ENCODE measurements at regions of chr2 and their contacts with region 1.

Region 1: DNA sequence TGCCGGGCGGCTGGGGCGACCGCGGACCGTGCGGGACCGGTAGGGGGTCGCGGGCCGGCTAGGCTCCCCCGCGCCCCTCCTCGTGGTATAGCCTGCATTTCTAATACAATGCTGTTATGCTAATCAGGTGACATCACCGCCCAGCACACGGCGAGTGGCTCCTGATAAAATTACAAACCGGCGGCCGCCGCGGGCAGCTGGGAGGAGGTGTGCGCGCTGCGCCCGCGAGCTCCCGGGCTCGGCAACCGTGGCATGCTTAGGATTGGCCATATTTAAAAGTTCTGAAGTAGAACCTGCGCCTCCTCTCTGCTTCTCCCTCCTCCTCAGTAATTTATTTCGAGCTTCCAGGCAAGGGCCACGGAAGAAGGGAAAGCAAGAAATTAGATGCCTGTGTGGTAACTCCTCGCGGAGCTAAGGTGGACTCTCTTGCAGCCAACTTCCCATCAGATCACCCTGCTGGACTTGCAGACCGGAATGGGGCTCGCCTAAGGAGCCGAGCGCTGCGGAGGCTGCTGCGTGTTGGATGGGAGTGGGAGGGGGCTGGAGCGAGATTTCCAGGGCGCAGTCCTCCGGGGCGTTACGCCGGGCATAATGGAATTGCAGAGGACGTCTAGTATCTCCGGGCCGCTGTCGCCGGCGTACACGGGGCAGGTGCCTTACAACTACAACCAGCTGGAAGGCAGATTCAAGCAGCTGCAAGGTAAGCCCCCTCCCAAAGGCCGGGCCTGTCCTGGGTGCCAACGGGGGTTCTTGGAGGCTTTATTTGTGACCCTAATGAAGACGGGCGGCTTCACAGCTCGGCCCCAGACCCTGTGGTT is 102.3 kb downstream of the SPTBN1 start:
- DNase-seq: peak; percentile 86
- ATAC-seq: peak; percentile 54
- H3K4me3 Mint-ChIP-seq: peak overlapping the region; percentile 91
- H3K27ac Mint-ChIP-seq: peak overlapping the region; percentile 94
- H3K4me1 Mint-ChIP-seq: peaks cover 43% of the 10 kb centered on the region
- H3K27me3 Mint-ChIP-seq: no peaks in the 10 kb centered on the region

Region 2: GRCh38 chr2:54115284-54116137 is 442.9 kb before region 1 on chr2 and contains the start of gene ACYP2:
- CTCF ChIA-PET with region 1: no interaction called
- POLR2A ChIA-PET with region 1: interaction called, 4 read pairs
- intact Hi-C with region 1: loop called in 1 of 2 experiments (anchors 5 kb)
- DNase-seq: peak; percentile 95
- ATAC-seq: peak; percentile 90
- H3K4me3 Mint-ChIP-seq: peak within 1 kb of the TSS; percentile 85
- H3K27ac Mint-ChIP-seq: peak within 1 kb of the TSS; percentile 96
- H3K4me1 Mint-ChIP-seq: peaks cover 12% of the 10 kb centered on the region
- H3K27me3 Mint-ChIP-seq: peaks cover 2% of the 10 kb centered on the region
- total RNA-seq, gene ACYP2: 6.0 to 6.9 TPM

Region 3: DNA sequence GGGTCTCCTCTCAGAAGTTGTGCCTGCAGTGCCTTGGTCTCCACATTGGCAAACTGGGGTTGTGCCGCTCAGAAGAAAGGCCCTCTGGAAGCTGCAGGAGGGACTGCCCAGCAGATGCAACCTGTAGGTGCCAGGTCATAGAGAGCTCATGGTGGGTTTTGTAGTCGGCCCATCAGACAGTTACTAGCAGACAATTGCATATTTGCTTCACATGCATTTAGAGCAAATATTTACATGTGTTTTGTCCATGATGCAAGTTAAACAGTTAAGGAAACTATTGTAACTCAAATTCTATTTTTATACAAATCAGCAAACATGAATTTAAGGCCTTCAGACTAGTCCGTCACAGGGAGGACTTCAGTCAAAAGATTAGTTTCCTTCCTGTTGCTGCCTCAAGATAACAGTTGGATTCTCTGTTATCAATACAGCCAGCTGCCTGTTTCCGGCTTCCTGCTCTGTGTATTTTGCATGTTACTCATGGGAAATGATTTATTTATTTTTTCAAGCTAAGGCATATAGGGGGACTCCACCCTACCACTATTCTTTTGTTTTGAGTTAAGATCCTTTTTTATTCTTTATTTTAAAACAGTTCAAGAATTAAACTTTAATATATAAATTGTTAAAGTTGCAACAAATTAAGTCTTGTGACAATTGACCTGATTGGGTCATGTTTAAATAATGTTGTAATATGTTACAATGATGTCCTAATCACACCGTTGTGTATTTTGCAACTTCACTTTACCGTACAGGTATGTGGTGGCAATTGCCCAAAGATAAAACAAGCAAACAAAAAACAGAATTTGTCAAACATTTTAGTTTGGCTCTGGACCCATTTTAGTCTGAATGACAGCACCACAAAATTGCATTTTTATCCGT is 31.2 kb after region 1 on chr2:
- CTCF ChIA-PET with region 1: interaction called, 6 read pairs
- POLR2A ChIA-PET with region 1: interaction called, 6 read pairs
- intact Hi-C with region 1: loop called in 1 of 2 experiments (anchors 2 kb)
- DNase-seq: peak; percentile 66
- ATAC-seq: peak; percentile 71
- H3K4me3 Mint-ChIP-seq: peak overlapping the region; percentile 53
- H3K27ac Mint-ChIP-seq: peak overlapping the region; percentile 93
- H3K4me1 Mint-ChIP-seq: peaks cover 84% of the 10 kb centered on the region
- H3K27me3 Mint-ChIP-seq: no peaks in the 10 kb centered on the region

Region 4: DNA sequence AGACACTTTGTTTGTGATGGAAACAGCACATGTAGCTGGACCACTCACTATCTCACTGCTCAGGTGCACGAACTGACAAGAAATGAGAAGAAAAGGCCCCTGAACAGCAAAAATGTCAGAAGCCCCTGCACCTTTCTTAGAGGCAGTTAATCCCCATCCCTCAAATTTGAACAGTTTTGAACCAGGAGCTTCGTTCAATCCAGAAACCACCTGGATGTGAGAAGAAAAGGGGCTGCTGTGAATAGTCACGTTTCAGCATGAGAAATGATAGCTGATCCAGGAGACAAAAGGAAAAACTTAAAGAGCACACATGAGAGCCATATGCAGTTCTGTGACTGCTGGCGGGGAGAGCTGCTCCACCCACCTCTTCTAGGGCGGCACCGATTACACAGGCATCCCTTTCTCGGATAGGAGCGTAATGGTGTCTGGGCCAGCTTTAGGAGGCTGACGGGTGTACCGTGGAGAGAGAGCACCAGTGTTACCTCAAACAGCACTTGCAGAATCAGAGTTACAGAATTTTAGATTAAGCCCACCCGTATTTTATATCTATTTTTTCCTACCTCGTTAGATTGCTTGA is 48.1 kb after region 1 on chr2:
- CTCF ChIA-PET with region 1: interaction called, 7 read pairs
- POLR2A ChIA-PET with region 1: interaction called, 4 read pairs
- intact Hi-C with region 1: loop called in 1 of 2 experiments (anchors 1 kb)
- DNase-seq: peak; percentile 77
- ATAC-seq: peak; percentile 81
- H3K4me3 Mint-ChIP-seq: peak overlapping the region; percentile 50
- H3K27ac Mint-ChIP-seq: peak overlapping the region; percentile 85
- H3K4me1 Mint-ChIP-seq: peaks cover 80% of the 10 kb centered on the region
- H3K27me3 Mint-ChIP-seq: no peaks in the 10 kb centered on the region

Region 5: DNA sequence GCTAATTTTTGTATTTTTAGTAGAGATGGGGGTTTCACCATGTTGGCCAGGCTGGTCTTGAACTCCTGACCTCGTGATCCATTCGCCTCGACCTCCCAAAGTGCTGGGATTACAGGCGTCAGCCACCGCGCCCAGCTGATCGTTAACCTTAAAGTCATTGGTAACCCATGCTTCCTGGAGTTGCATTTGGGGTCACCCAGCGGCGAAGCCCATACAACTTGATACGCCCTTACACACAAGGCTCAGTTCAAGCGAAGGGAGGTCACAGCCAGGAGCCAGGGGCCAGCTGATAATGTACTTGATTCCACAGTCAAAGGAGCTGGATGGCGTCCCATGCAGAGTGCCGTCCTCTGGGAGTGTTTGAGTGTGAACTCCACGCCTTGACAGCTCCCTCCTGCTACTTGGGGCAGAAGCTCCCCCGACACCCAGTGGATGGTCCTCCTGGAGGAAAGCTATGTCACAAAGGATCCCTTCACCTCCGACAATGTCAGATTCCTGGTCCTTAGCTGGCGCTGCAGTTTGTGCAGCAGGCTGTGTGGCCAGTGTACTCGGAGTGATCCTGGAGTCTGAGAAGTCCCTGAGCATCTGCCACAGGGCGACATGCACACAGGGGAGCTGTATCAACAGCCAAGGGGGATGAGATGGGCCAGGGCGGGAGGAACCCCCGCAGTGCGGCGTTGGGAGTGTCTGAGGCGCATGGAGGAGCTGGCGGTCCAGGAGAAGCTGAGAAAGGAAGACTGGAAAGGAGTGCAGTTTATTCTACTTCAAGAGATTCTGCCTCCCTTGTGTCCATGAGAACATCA is 665.8 kb after region 1 on chr2:
- CTCF ChIA-PET with region 1: no interaction called
- POLR2A ChIA-PET with region 1: no interaction called
- intact Hi-C with region 1: loop called in 1 of 2 experiments (anchors 10 kb)
- DNase-seq: no peak
- ATAC-seq: no peak
- H3K4me3 Mint-ChIP-seq: peak overlapping the region; percentile 66
- H3K27ac Mint-ChIP-seq: peak overlapping the region; percentile 76
- H3K4me1 Mint-ChIP-seq: peaks cover 38% of the 10 kb centered on the region
- H3K27me3 Mint-ChIP-seq: no peaks in the 10 kb centered on the region

Measured in activated CD4-positive, alpha-beta T cell treated with anti-CD3 and anti-CD28 coated beads for 36 hours (primary cell).